Activated CD4-positive, alpha-beta memory T cell treated with anti-CD3 and anti-CD28 coated beads for 36 hours (primary cell): ENCODE measurements at regions of chr14 and their contacts with region 1.

Region 1: GRCh38 chr14:21711360-21711961 is 37.8 kb upstream of the OR4E1 start:
- DNase-seq: peak; percentile 20
- H3K4me3 Mint-ChIP-seq: peak overlapping the region; percentile 51
- H3K27ac Mint-ChIP-seq: peak overlapping the region; percentile 51
- H3K4me1 Mint-ChIP-seq: no peaks in the 10 kb centered on the region
- H3K27me3 Mint-ChIP-seq: peaks cover 11% of the 10 kb centered on the region

Region 2: GRCh38 chr14:21543521-21543960 is 167.9 kb before region 1 on chr14:
- CTCF ChIA-PET with region 1: no interaction called
- POLR2A ChIA-PET with region 1: no interaction called
- intact Hi-C with region 1: no loop called
- DNase-seq: no peak
- H3K4me3 Mint-ChIP-seq: no peak overlapping the region
- H3K27ac Mint-ChIP-seq: no peak overlapping the region
- H3K4me1 Mint-ChIP-seq: no peaks in the 10 kb centered on the region
- H3K27me3 Mint-ChIP-seq: peaks cover 10% of the 10 kb centered on the region

Region 3: GRCh38 chr14:21647380-21647779 is 64.1 kb before region 1 on chr14:
- CTCF ChIA-PET with region 1: interaction called, 7 read pairs
- POLR2A ChIA-PET with region 1: no interaction called
- intact Hi-C with region 1: loop called (anchors 10 kb)
- DNase-seq: no peak
- H3K4me3 Mint-ChIP-seq: no peak overlapping the region
- H3K27ac Mint-ChIP-seq: no peak overlapping the region
- H3K4me1 Mint-ChIP-seq: no peaks in the 10 kb centered on the region
- H3K27me3 Mint-ChIP-seq: peaks cover 16% of the 10 kb centered on the region

Region 4: GRCh38 chr14:21694425-21694824 is 17.0 kb before region 1 on chr14:
- CTCF ChIA-PET with region 1: interaction called, 32 read pairs
- POLR2A ChIA-PET with region 1: no interaction called
- intact Hi-C with region 1: no loop called
- DNase-seq: no peak
- H3K4me3 Mint-ChIP-seq: no peak overlapping the region
- H3K27ac Mint-ChIP-seq: no peak overlapping the region
- H3K4me1 Mint-ChIP-seq: no peaks in the 10 kb centered on the region
- H3K27me3 Mint-ChIP-seq: peaks cover 9% of the 10 kb centered on the region

Region 5: GRCh38 chr14:21699551-21699950 is 11.9 kb before region 1 on chr14:
- CTCF ChIA-PET with region 1: interaction called, 32 read pairs
- POLR2A ChIA-PET with region 1: no interaction called
- intact Hi-C with region 1: no loop called
- DNase-seq: no peak
- H3K4me3 Mint-ChIP-seq: no peak overlapping the region
- H3K27ac Mint-ChIP-seq: no peak overlapping the region
- H3K4me1 Mint-ChIP-seq: peaks cover 15% of the 10 kb centered on the region
- H3K27me3 Mint-ChIP-seq: no peaks in the 10 kb centered on the region

Region 6: GRCh38 chr14:21723431-21724045 is 12.1 kb after region 1 on chr14:
- CTCF ChIA-PET with region 1: interaction called, 27 read pairs
- POLR2A ChIA-PET with region 1: no interaction called
- intact Hi-C with region 1: no loop called
- DNase-seq: peak; percentile 63
- H3K4me3 Mint-ChIP-seq: peak overlapping the region; percentile 69
- H3K27ac Mint-ChIP-seq: peak overlapping the region; percentile 80
- H3K4me1 Mint-ChIP-seq: peaks cover 3% of the 10 kb centered on the region
- H3K27me3 Mint-ChIP-seq: peaks cover 16% of the 10 kb centered on the region

Region 7: DNA sequence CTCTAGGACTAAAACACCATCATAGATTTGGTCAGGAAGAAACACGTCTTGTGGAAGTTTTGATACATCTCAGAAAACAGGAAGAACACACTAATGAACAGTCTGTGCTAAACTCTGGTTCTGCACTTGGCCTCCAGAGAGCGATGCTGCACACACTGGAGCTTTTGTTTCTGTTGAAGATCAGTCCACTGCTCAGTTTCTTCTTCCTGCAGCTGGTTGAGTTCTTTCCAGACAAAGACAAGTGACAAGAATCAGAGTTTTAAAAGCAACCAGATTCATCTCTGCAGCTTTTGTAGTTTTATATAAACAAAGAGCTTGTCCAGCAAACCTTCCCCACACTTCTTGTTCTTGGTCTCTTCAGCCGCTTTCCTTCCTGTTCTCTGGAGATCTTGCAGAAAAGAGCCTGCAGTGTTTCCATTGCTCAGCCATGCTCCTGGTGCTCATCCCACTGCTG is 191.2 kb after region 1 on chr14:
- CTCF ChIA-PET with region 1: no interaction called
- POLR2A ChIA-PET with region 1: no interaction called
- intact Hi-C with region 1: no loop called
- DNase-seq: peak; percentile 61
- H3K4me3 Mint-ChIP-seq: peak overlapping the region; percentile 71
- H3K27ac Mint-ChIP-seq: peak overlapping the region; percentile 67
- H3K4me1 Mint-ChIP-seq: peaks cover 14% of the 10 kb centered on the region
- H3K27me3 Mint-ChIP-seq: no peaks in the 10 kb centered on the region